Psoas muscle (tissue), 8 donors: ENCODE measurements at regions of chr9 and their contacts with region 1.

Region 1: GRCh38 chr9:130461218-130461630 is 16.5 kb downstream of the ASS1 start:
- DNase-seq: peak; percentile 69 to 83
- ATAC-seq: peak; percentile 57 to 90 (median 74)
- H3K4me3 ChIP-seq: no peak overlapping the region
- H3K27ac ChIP-seq: no peak overlapping the region
- H3K4me1 ChIP-seq: no peaks in the 10 kb centered on the region
- H3K27me3 ChIP-seq: peaks cover 0 to 4% (median 0%) of the 10 kb centered on the region in 3 donors
- CTCF ChIP-seq: peak; percentile 98

Region 2: GRCh38 chr9:130522233-130522808 is 61.1 kb after region 1 on chr9:
- intact Hi-C with region 1: no loop called
- DNase-seq: no peak
- ATAC-seq: no peak
- H3K4me3 ChIP-seq: no peak overlapping the region
- H3K27ac ChIP-seq: no peak overlapping the region
- H3K4me1 ChIP-seq: no peaks in the 10 kb centered on the region
- H3K27me3 ChIP-seq: peaks cover 0 to 17% (median 0%) of the 10 kb centered on the region in 3 donors
- CTCF ChIP-seq: no peak

Region 3: GRCh38 chr9:130578865-130579737 is 117.9 kb after region 1 on chr9 and contains the start of gene FUBP3:
- intact Hi-C with region 1: loop called in 1 of 2 experiments (anchors 5 kb)
- DNase-seq: peak; percentile 96 to 97
- ATAC-seq: peak; percentile 98 to 99 (median 98)
- H3K4me3 ChIP-seq: peak within 1 kb of the TSS; percentile 88
- H3K27ac ChIP-seq: peak within 1 kb of the TSS; percentile 94
- H3K4me1 ChIP-seq: peaks cover 26% of the 10 kb centered on the region
- H3K27me3 ChIP-seq: no peaks in the 10 kb centered on the region
- CTCF ChIP-seq: no peak
- total RNA-seq, gene FUBP3: 14.3 to 17.9 (median 16.6) TPM

Region 4: GRCh38 chr9:130682490-130683121 is 221.4 kb after region 1 on chr9:
- intact Hi-C with region 1: loop called (anchors 1 kb)
- DNase-seq: peak; percentile 82 to 88
- ATAC-seq: peak; percentile 75 to 88 (median 83)
- H3K4me3 ChIP-seq: peak overlapping the region; percentile 75
- H3K27ac ChIP-seq: no peak overlapping the region
- H3K4me1 ChIP-seq: peaks cover 11% of the 10 kb centered on the region
- H3K27me3 ChIP-seq: peaks cover 0 to 18% (median 3%) of the 10 kb centered on the region in 3 donors
- CTCF ChIP-seq: peak; percentile 86